ENCODE measurements at regions of chr12 and their contacts with region 1.

Region 1: DNA sequence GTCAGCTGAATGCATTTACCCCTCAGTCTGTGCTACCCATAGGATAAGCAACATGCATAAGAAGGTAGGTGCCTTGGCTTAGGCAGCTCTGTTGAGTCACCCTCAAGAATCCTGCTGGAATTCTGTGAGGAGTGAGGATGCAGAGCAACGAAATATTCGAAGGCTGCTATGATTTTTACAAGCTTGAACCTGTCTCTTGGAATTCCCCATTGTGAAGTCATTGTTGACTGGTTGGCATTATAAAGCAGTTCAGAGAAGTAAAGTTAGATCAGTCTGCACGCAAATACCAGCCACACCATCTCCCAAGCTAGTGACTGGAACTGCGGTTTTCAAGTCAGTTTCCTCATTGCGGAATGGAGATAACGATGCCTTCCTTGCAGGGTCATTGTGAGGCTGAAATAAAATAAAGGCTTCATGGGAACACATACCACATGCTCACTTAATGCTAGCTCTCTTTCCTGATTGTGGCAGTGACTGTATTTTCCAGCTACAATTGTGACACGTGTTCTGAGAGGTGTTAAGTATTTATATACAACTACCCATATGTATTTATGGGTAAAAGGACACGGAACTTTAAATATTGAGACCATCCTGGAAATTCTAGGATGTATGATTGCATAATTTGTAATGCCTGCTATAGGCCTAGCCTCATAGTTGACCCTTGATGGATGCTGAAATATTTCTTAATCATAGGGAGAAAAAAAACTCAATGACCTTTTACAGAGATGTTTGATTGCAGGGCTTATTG is 96.7 kb downstream of the ETV6 start:
- DNase-seq: no peak
- H3K4me3 ChIP-seq: no peak overlapping the region
- H3K27ac ChIP-seq: no peak overlapping the region
- H3K4me1 ChIP-seq: peaks cover 12 to 26% (median 14%) of the 10 kb centered on the region in 4 experiments; a peak in 5 of 7 replicates
- H3K27me3 ChIP-seq: no peaks in the 10 kb centered on the region
- CTCF ChIP-seq: no peak
- EP300 ChIP-seq: no peak
- POLR2A ChIP-seq: no peak
- RAD21 ChIP-seq: no peak

Region 2: DNA sequence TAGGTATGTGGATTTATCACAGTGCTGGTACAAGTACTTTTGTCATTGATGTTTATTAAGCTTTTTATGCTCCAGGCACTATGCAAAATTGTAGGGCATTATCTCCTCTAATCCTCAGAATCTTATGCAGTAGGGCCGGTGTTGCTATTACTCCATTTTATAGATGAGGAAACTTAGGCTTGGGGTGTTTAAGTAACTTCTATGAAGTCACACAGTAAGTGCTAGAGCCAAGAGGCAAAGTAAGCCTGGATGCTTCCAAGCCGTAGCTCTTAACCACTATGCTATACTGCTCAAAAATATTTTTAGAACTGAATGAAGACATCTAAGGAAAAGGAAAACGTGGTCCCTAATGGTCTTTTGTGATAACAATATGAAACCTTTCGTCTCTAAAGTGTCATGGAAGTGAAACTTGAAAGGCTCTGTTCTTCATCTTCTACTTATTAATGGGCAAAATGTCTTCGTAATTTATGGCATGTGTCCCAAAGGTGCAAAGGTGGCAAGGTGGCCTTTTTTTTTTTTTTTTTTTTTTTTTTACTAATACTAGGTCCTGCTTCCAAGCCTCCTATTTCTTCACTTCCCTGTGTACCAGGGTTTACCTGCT is 11.5 kb before region 1 on chr12:
- CTCF ChIA-PET with region 1: interaction called, 22 read pairs
- POLR2A ChIA-PET with region 1: interaction called, 3 read pairs
- DNase-seq: no peak
- H3K4me3 ChIP-seq: no peak overlapping the region
- H3K27ac ChIP-seq: no peak overlapping the region
- H3K4me1 ChIP-seq: no peaks in the 10 kb centered on the region; a peak in 1 of 7 replicates
- H3K27me3 ChIP-seq: no peaks in the 10 kb centered on the region
- CTCF ChIP-seq: no peak
- EP300 ChIP-seq: no peak
- POLR2A ChIP-seq: no peak
- RAD21 ChIP-seq: no peak

Measured in H1 (cell line).